Activated CD4-positive, alpha-beta memory T cell treated with anti-CD3 and anti-CD28 coated beads for 36 hours (primary cell): ENCODE measurements at regions of chr3 and their contacts with region 1.

Region 1: DNA sequence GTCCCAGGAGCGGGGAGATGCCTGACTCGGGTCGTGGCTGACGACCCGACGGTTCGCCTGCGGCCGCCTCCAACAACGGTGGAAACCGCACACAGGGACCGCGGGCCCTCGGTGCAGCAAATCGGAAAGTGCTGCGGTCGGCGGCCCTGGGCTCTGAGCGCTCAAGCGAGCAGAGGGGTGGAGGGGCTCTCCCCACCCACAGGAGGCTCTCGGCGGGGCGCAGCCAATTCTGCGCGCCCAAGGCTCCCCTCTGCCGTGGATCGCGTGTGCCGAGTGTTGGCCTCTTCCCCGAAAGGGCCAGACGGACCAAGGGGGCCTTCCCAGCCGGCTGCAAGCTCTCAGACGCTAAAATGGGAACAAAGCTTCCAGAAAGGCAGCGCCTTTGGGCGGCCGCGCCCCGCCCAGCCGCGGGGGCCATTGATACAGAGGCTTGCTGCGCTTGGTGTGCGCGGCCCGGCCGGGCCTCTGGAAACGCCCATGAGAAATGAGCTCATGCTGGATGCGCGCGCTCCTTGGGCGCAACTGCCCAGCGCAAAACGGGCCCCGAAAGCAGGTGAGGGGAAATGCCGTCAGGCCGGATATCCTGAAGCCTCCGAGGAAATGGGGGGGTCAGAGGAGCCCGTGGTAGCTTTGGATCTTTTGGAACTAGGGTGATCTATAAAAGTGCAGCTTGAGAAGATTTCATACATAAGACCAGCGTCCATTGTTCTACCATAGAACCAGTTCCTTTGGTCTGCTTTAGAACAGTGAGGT is 1.2 kb upstream of the GSK3B start:
- DNase-seq: peak; percentile 94
- H3K4me3 Mint-ChIP-seq: no peak overlapping the region
- H3K27ac Mint-ChIP-seq: no peak overlapping the region
- H3K4me1 Mint-ChIP-seq: peaks cover 18% of the 10 kb centered on the region
- H3K27me3 Mint-ChIP-seq: no peaks in the 10 kb centered on the region

Region 2: GRCh38 chr3:119293871-119294695 is 801.3 kb before region 1 on chr3 and contains the start of gene ARHGAP31:
- CTCF ChIA-PET with region 1: interaction called, 4 read pairs
- POLR2A ChIA-PET with region 1: interaction called, 8 read pairs
- intact Hi-C with region 1: loop called (anchors 1 kb)
- DNase-seq: peak; percentile 95
- H3K4me3 Mint-ChIP-seq: peak within 1 kb of the TSS; percentile 83
- H3K27ac Mint-ChIP-seq: peak within 1 kb of the TSS; percentile 93
- H3K4me1 Mint-ChIP-seq: peaks cover 44% of the 10 kb centered on the region
- H3K27me3 Mint-ChIP-seq: no peaks in the 10 kb centered on the region
- total RNA-seq, gene ARHGAP31: 10.8 to 11.4 TPM

Region 3: DNA sequence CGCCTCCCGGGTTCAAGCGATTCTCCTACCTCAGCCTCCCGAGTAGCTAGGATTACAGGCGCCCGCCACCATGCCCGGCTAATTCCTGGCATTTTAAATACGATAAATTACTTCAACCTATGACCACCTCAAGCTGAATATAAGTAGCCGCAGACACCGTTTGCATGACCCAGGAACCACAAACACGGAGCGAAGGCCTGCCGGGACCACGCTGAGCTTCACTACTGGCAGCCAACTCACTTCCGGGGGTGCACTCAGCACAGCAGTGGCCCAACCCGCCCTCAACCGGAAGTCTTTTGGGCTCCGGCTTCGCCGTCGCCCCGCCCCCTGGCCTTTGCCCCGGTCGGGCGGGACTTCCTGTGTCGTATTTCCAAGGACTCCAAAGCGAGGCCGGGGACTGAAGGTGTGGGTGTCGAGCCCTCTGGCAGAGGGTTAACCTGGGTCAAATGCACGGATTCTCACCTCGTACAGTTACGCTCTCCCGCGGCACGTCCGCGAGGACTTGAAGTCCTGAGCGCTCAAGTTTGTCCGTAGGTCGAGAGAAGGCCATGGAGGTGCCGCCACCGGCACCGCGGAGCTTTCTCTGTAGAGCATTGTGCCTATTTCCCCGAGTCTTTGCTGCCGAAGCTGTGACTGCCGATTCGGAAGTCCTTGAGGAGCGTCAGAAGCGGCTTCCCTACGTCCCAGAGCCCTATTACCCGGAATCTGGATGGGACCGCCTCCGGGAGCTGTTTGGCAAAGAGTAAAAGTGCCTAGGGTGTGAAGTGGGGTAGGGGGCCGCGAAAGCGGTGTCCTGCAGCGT is 597.0 kb before region 1 on chr3 and contains the start of gene TIMMDC1:
- CTCF ChIA-PET with region 1: no interaction called
- POLR2A ChIA-PET with region 1: no interaction called
- intact Hi-C with region 1: loop called (anchors 1 kb)
- DNase-seq: peak; percentile 98
- H3K4me3 Mint-ChIP-seq: peak within 1 kb of the TSS; percentile 98
- H3K27ac Mint-ChIP-seq: peak within 1 kb of the TSS; percentile 96
- H3K4me1 Mint-ChIP-seq: peaks cover 29% of the 10 kb centered on the region
- H3K27me3 Mint-ChIP-seq: no peaks in the 10 kb centered on the region
- total RNA-seq, gene TIMMDC1: 93.7 to 105 TPM

Region 4: DNA sequence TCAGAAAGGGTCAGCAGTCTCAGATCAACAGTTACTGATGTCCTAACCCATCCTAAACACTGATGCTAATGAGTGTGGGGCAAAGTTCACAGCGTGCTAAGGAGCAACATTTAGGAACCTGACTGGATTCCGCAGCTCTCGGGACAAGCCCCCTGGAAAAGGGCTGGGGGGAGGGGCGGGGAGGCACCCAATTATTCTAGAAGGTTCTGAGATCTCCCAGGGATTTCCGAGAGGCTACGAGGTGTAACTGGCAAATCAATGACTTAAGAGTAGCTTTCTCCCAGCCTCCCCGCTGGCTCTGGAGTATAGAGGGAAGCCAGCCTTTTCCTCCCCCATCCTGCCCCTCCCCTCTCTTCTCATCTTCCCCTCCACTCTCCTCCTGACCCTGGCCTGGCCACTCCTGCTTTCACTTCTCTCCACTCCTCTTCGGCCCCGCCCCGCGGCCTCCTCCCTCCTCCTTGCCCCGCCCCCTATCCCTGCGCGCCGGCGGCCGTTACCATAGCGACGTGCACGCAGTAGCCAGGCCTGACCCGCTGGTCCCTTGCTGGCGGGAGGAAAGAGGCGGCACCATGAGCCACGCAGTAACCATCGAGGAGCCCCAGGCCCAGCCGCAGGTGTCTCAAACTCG is 392.8 kb before region 1 on chr3 and contains the start of gene CFAP91:
- CTCF ChIA-PET with region 1: no interaction called
- POLR2A ChIA-PET with region 1: no interaction called
- intact Hi-C with region 1: loop called (anchors 1 kb)
- DNase-seq: peak; percentile 92
- H3K4me3 Mint-ChIP-seq: peak within 1 kb of the TSS; percentile 74
- H3K27ac Mint-ChIP-seq: no peak within 1 kb of the TSS
- H3K4me1 Mint-ChIP-seq: peaks cover 43% of the 10 kb centered on the region
- H3K27me3 Mint-ChIP-seq: no peaks in the 10 kb centered on the region
- total RNA-seq, gene CFAP91: 0.29 to 0.31 TPM

Region 5: GRCh38 chr3:119912220-119912619 is 183.2 kb before region 1 on chr3:
- CTCF ChIA-PET with region 1: interaction called, 5 read pairs
- POLR2A ChIA-PET with region 1: interaction called, 5 read pairs
- intact Hi-C with region 1: loop called (anchors 1 kb)
- DNase-seq: no peak
- H3K4me3 Mint-ChIP-seq: no peak overlapping the region
- H3K27ac Mint-ChIP-seq: peak overlapping the region; percentile 69
- H3K4me1 Mint-ChIP-seq: peaks cover 24% of the 10 kb centered on the region
- H3K27me3 Mint-ChIP-seq: no peaks in the 10 kb centered on the region

Region 6: GRCh38 chr3:120348981-120349818 is 253.8 kb after region 1 on chr3 and contains the start of gene LRRC58:
- CTCF ChIA-PET with region 1: no interaction called
- POLR2A ChIA-PET with region 1: interaction called, 18 read pairs
- intact Hi-C with region 1: loop called (anchors 1 kb)
- DNase-seq: peak; percentile 91
- H3K4me3 Mint-ChIP-seq: peak within 1 kb of the TSS; percentile 84
- H3K27ac Mint-ChIP-seq: peak within 1 kb of the TSS; percentile 85
- H3K4me1 Mint-ChIP-seq: peaks cover 44% of the 10 kb centered on the region
- H3K27me3 Mint-ChIP-seq: no peaks in the 10 kb centered on the region
- total RNA-seq, gene LRRC58: 16.2 to 16.9 TPM

Region 7: DNA sequence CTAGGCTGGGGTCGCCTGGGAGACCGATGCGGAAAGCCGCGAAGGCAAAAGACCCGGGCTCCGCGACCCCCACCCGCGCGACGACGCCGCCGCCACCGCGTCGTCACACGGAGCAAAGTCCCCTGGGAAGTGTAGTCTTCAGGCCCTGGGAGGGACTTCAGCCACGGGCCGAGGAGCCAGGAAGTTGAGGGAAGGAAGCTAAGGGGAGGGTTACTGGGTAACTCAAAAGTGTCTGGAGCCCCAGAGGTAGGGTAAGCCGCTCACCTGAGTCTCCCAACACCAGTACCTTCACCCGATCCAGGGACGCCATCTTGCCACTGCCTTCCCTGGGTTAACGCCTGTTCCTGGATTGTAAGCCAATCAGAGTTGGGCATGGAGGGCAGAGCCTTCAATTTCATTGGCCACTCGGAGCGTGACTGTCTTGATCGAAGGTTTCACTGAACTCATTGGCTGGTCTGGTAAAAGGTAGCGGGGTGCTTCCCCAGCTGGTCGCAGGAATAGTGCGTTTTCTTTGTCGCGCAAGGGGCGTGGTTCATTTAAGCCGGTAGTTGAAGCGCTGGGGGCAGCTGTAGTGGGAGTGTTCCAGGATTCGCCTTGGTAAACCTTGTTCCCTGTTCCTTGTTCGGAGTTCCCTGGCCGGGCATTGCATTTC is 646.9 kb after region 1 on chr3 and contains the starts of genes GTF2E1 and RABL3:
- CTCF ChIA-PET with region 1: no interaction called
- POLR2A ChIA-PET with region 1: no interaction called
- intact Hi-C with region 1: loop called (anchors 1 kb)
- DNase-seq: peak; percentile 98
- H3K4me3 Mint-ChIP-seq: peak within 1 kb of the TSS; percentile 96
- H3K27ac Mint-ChIP-seq: peak within 1 kb of the TSS; percentile 94
- H3K4me1 Mint-ChIP-seq: peaks cover 28% of the 10 kb centered on the region
- H3K27me3 Mint-ChIP-seq: peaks cover 2% of the 10 kb centered on the region
- total RNA-seq, gene GTF2E1: 18.4 to 19.8 TPM
- total RNA-seq, gene RABL3: 28.7 to 30.0 TPM